B cell (primary cell): ENCODE measurements at regions of chr10 and their contacts with region 1.

Region 1: DNA sequence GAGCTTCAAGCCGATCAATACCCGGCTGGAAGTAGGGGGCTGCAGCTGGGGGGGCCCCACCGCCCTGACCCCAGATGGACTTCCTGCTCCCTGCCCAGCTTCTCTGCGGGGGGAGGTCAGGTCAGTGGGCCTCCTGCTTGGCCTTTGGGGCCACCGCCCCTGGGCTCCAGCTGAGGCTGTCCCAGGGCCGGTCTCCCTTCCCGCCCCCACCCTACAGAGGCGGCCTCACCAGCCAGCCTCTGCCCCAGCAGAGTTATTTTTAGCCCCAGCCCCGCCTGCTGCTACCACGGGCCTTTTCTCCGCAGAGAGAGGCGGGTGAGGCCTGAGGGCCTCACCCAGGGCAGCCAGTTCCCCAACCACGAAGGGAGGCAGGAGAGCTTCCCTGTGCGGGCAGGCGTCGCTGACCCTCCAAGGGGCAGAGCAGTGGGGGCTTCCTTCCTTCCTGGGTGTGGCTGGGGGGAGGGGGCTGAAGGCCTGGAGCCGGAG is 24.4 kb downstream of the PWWP2B start:
- DNase-seq: peak; percentile 75
- ATAC-seq: peak; percentile 29
- H3K4me3 ChIP-seq: peak overlapping the region in 4 of 5 experiments; percentile 17 to 46 (median 24)
- H3K4me3 Mint-ChIP-seq: peak overlapping the region; percentile 79
- H3K27ac ChIP-seq: peak overlapping the region; percentile 92 to 99
- H3K27ac Mint-ChIP-seq: peak overlapping the region; percentile 94
- H3K4me1 ChIP-seq: peaks cover 72 to 76% of the 10 kb centered on the region in 2 donors
- H3K4me1 Mint-ChIP-seq: peaks cover 59% of the 10 kb centered on the region
- H3K27me3 ChIP-seq: no peaks in the 10 kb centered on the region
- H3K27me3 Mint-ChIP-seq: no peaks in the 10 kb centered on the region
- CTCF ChIP-seq: no peak

Region 2: GRCh38 chr10:131708225-131708880 is 713.1 kb before region 1 on chr10:
- CTCF ChIA-PET with region 1: no interaction called
- POLR2A ChIA-PET with region 1: no interaction called
- intact Hi-C with region 1: no loop called
- DNase-seq: no peak
- ATAC-seq: no peak
- H3K4me3 ChIP-seq: no peak overlapping the region
- H3K4me3 Mint-ChIP-seq: no peak overlapping the region
- H3K27ac ChIP-seq: no peak overlapping the region
- H3K27ac Mint-ChIP-seq: no peak overlapping the region
- H3K4me1 ChIP-seq: no peaks in the 10 kb centered on the region
- H3K4me1 Mint-ChIP-seq: no peaks in the 10 kb centered on the region
- H3K27me3 ChIP-seq: no peaks in the 10 kb centered on the region
- H3K27me3 Mint-ChIP-seq: no peaks in the 10 kb centered on the region
- CTCF ChIP-seq: no peak

Region 3: DNA sequence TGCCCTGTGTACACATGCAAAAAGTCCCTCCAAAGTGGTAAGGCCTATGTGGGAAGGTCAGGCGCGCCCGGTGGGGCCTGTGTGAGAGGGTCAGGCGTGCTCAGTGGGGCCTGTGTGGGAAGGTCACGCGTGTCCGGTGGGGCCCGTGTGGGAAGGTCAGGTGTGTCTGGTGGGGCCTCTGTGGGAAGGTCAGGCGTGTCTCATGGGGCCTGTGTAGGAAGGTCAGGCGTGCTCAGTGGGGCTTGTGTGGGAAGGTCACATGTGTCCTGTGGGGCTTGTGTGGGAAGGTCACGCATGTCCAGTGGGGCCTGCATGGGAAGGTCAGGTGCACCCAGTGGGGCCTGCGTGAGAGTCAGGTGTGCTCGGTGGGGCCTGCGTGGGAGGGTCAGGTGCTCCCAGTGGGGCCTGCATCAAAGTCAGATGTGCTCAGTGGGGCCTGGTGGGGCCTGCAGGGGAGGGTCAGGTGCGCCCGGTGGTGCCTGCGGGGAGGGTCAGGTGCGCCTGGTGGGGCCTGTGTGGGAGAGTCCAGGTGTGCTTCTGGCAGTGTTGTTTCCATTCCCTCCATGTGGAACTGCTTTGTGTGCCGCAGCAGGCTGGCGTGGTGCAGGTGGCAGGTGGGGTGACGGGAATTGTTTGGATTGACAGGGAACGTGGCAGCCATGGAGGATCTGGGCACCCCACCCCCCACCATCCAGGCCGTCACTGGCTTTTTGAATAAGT is 74.1 kb before region 1 on chr10:
- CTCF ChIA-PET with region 1: no interaction called
- POLR2A ChIA-PET with region 1: no interaction called
- intact Hi-C with region 1: no loop called
- DNase-seq: no peak
- ATAC-seq: peak; percentile 39
- H3K4me3 ChIP-seq: no peak overlapping the region
- H3K4me3 Mint-ChIP-seq: no peak overlapping the region
- H3K27ac ChIP-seq: no peak overlapping the region
- H3K27ac Mint-ChIP-seq: peak overlapping the region; percentile 76
- H3K4me1 ChIP-seq: no peaks in the 10 kb centered on the region
- H3K4me1 Mint-ChIP-seq: peaks cover 6% of the 10 kb centered on the region
- H3K27me3 ChIP-seq: no peaks in the 10 kb centered on the region
- H3K27me3 Mint-ChIP-seq: no peaks in the 10 kb centered on the region
- CTCF ChIP-seq: no peak

Region 4: DNA sequence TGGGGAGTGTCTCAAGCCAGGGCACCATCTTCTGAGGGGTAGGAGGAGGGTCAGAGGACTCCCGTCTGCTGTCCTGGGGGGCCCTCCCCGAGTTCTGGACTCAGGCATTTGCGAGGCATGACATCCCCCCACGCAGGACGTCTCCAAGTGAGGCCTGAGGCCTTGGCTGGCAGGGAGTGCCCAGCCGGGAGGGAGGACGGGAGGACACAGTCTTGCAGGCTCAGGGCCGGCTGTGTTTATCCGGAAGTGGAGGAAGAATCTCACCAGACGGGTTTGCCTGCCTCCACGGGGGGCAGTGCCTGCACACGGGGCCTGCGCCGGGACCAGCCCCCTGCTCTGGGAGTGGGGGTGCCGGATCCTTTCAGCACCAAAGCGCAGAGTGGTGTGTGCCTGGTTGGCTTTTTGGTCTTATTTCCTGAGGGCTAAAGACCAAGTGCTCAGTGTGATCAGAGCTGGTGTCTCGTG is 13.6 kb before region 1 on chr10:
- CTCF ChIA-PET with region 1: interaction called, 6 read pairs
- POLR2A ChIA-PET with region 1: interaction called, 6 read pairs
- intact Hi-C with region 1: loop called (anchors 1 kb)
- DNase-seq: peak; percentile 52
- ATAC-seq: peak; percentile 44
- H3K4me3 ChIP-seq: peak overlapping the region in 3 of 5 experiments; percentile 34 to 39 (median 36)
- H3K4me3 Mint-ChIP-seq: peak overlapping the region; percentile 60
- H3K27ac ChIP-seq: peak overlapping the region; percentile 33 to 66
- H3K27ac Mint-ChIP-seq: peak overlapping the region; percentile 46
- H3K4me1 ChIP-seq: peaks cover 29 to 43% of the 10 kb centered on the region in 2 donors
- H3K4me1 Mint-ChIP-seq: peaks cover 34% of the 10 kb centered on the region
- H3K27me3 ChIP-seq: no peaks in the 10 kb centered on the region
- H3K27me3 Mint-ChIP-seq: no peaks in the 10 kb centered on the region
- CTCF ChIP-seq: no peak

Region 5: DNA sequence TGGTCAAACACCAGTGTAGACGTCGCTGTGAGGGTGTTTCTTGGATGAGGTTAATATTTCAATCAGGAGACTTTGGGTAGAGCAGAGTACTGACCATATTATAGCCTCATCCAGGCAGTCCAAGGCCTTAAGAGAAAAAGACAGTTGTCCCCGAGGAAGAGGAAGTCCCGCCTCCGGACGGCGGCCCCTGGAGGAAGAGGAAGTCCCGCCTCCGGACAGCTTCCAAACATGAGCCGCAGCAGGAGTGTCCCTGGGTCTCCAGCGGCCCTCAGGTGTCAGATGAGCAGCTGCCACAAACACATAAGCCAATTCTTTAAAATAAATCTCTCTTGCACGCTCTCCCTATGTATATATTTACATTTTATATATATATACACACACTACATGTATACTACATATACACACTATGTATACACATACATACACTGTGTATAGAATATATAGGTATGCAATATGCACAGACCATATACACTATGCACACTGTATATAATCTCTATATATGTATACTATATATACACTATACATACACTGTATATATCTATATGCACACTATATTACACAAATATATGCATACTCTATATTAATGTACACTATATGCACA is 13.1 kb after region 1 on chr10:
- CTCF ChIA-PET with region 1: interaction called, 6 read pairs
- POLR2A ChIA-PET with region 1: interaction called, 16 read pairs
- intact Hi-C with region 1: no loop called
- DNase-seq: peak; percentile 72
- ATAC-seq: peak; percentile 61
- H3K4me3 ChIP-seq: peak overlapping the region in 2 of 5 experiments; percentile 27 to 31
- H3K4me3 Mint-ChIP-seq: peak overlapping the region; percentile 61
- H3K27ac ChIP-seq: no peak overlapping the region
- H3K27ac Mint-ChIP-seq: peak overlapping the region; percentile 74
- H3K4me1 ChIP-seq: peaks cover 16 to 33% of the 10 kb centered on the region in 2 donors
- H3K4me1 Mint-ChIP-seq: peaks cover 24% of the 10 kb centered on the region
- H3K27me3 ChIP-seq: no peaks in the 10 kb centered on the region
- H3K27me3 Mint-ChIP-seq: no peaks in the 10 kb centered on the region
- CTCF ChIP-seq: no peak

Region 6: DNA sequence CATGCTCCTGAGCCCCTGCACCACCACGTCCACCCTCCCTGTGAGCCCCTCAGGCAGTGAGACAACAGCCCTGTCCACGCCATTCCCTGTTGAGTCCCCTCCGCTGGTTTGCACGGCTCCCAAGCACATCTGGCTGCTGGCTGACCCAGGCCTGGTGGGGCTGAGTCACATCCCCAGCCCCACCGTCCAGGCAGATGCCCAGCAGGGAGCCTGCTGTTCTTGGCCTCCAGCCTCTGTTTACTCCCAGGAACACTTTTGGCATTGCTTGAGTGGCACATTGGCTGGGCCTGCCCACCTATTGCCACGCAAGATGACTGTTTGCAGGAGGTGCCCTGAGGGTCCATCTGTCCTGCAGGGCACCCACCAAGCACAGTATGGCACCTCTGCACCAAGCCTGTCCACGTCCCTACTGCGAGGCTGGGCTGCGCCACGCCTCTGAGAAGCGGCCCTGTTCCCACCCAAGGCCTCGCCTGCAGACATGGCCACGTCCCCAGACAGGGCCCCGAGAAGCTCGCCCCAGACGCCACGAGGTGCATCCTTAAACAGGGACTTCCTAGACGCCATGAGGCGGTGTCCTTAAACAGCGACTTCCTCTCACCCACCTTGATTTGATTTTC is 67.8 kb after region 1 on chr10:
- CTCF ChIA-PET with region 1: no interaction called
- POLR2A ChIA-PET with region 1: no interaction called
- intact Hi-C with region 1: no loop called
- DNase-seq: no peak
- ATAC-seq: no peak
- H3K4me3 ChIP-seq: no peak overlapping the region
- H3K4me3 Mint-ChIP-seq: no peak overlapping the region
- H3K27ac ChIP-seq: no peak overlapping the region
- H3K27ac Mint-ChIP-seq: no peak overlapping the region
- H3K4me1 ChIP-seq: no peaks in the 10 kb centered on the region
- H3K4me1 Mint-ChIP-seq: no peaks in the 10 kb centered on the region
- H3K27me3 ChIP-seq: no peaks in the 10 kb centered on the region
- H3K27me3 Mint-ChIP-seq: no peaks in the 10 kb centered on the region
- CTCF ChIP-seq: no peak